Activated T-helper 2 cell treated with anti-CD3 and anti-CD28 coated beads, Interferon-gamma antibody, Interleukin-2, Interleukin-4, amounts not matched to agents 10 μg/mL and 5 μg/mL and 100 μg/mL, durations not matched to agents 14 hours and 24 hours and 36 hours (primary cell): ENCODE measurements at regions of chr20 and their contacts with region 1.

Region 1: GRCh38 chr20:18507218-18508021 is at the start of gene SEC23B:
- DNase-seq: peak; percentile 97
- H3K4me3 Mint-ChIP-seq: peak within 1 kb of the TSS; percentile 100
- H3K27ac Mint-ChIP-seq: peak within 1 kb of the TSS; percentile 100
- H3K4me1 Mint-ChIP-seq: peaks cover 27% of the 10 kb centered on the region
- H3K27me3 Mint-ChIP-seq: no peaks in the 10 kb centered on the region
- total RNA-seq, gene SEC23B: 126 and 131 TPM in 2 replicates

Region 2: DNA sequence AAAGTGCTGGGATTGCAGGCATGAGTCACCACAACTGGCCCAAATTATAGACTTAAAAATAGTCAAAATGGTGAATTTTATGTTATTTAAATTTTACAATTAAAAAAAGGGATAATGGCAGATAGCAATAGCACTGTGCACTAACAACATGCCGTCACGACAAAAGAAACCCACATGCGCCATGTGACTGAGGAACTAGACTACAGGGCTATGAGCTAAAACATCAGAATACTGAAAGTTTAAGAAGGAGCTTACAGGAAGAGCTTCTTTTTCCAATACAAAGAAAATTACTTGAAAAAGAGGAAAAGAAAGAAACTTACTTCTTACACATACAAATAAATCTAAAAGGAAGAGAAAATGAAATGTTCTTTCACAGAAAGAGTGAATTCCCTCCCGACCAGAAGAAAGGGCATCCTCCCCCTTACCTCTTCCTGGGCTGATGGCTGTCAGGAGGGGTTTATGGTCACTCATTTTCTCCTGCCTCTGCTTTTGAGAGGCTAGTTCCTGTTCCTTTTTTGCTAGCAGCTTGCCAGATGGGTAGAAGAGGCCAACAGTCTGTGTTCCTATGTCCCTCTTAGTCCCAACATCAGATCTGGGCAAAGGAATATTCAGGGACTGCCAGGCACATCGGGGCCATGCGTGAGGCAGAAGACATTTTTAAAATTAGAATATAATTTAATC is 95.1 kb before region 1 on chr20:
- intact Hi-C with region 1: loop called (anchors 5 kb)
- DNase-seq: no peak
- H3K4me3 Mint-ChIP-seq: no peak overlapping the region
- H3K27ac Mint-ChIP-seq: no peak overlapping the region
- H3K4me1 Mint-ChIP-seq: peaks cover 6% of the 10 kb centered on the region
- H3K27me3 Mint-ChIP-seq: peaks cover under 1% of the 10 kb centered on the region

Region 3: DNA sequence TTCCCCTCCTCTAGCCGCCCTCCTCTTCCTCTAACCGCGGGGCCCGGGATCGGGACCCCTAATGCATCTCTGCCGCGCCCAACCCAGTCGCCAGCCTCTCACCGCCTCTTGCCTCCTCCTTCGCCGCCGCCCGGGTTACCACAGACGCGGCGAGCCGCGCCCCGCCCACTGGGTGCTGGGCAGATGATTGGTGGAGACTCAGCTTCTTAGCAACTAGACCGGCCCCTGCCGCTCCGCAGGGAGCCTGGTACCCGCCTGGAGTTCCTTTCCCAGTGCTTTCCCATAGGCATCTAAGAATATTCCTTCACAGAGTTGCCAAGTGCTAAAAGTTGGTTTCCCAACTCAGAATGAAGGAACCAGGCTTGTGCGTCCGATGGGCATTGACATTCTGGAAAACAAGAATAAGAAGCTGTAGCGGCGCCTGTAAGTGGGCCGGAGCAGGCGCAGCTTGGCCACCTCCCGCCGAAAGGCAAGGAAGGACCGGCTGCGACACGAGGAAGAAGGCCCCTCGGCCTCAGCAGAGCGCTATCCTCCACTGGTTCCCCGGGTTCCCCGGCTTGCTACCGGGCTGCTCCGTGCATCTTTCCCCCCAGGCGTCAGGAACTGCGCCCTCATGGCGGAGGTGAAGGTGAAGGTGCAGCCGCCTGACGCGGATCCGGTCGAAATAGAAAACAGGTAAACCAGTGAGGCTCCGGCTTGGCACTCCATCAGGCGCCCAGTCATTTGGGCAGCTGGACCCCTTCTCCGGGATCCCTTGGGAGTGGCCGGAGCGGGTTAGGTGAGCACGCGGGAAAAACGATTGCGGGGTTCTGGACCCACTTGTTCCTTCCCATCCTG is 40.3 kb before region 1 on chr20 and contains the starts of genes DZANK1 and POLR3F:
- intact Hi-C with region 1: loop called (anchors 1 kb)
- DNase-seq: peak; percentile 90
- H3K4me3 Mint-ChIP-seq: peak within 1 kb of the TSS; percentile 97
- H3K27ac Mint-ChIP-seq: peak within 1 kb of the TSS; percentile 88
- H3K4me1 Mint-ChIP-seq: peaks cover 19% of the 10 kb centered on the region
- H3K27me3 Mint-ChIP-seq: no peaks in the 10 kb centered on the region
- total RNA-seq, gene DZANK1: 1.3 TPM in 2 replicates
- total RNA-seq, gene POLR3F: 12.5 and 13.5 TPM in 2 replicates

Region 4: GRCh38 chr20:18496740-18497592 is 10.5 kb before region 1 on chr20 and contains the start of gene RBBP9:
- intact Hi-C with region 1: loop called (anchors 1 kb)
- DNase-seq: peak; percentile 69
- H3K4me3 Mint-ChIP-seq: peak within 1 kb of the TSS; percentile 97
- H3K27ac Mint-ChIP-seq: peak within 1 kb of the TSS; percentile 87
- H3K4me1 Mint-ChIP-seq: peaks cover 13% of the 10 kb centered on the region
- H3K27me3 Mint-ChIP-seq: no peaks in the 10 kb centered on the region
- total RNA-seq, gene RBBP9: 21.2 and 23.5 TPM in 2 replicates

Region 5: DNA sequence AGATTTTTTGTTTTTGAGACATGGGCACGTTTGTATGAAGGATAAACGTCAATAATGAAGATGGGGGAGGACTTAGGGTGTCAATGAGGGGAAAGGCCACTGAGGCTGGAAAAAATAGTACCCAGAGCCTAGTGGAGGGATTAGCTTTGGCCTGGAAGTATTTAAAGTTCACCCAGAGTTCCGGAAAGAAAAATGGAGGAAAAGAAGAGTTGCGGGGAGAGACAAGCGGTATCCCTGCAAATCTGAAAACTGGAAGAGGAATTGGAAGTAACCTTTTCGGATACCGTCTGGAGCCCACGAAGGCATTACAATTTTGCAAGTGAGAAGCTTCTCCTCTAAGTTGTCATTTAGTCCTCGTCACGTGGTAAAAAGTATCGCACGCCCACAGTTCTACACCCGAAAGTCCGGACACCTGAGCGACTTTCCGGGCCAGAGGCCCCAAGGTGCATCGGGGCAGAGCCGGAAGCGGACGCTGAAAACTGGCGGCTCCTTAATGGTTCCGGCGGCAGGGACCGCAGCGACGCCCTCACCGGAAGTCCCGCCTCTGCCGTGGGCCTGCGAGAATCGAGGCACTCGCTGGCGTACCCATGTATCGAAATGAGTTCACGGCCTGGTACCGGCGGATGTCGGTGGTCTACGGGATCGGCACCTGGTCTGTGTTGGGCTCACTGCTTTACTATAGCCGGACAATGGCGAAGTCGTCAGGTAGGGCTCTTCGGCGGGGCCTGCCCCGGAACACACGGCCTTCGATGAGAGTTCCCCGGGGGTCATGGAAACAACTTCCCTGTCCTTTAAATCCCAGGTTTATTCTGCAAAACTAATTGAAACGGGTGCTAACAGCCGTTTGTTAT is 59.7 kb after region 1 on chr20 and contains the start of gene SMIM26:
- intact Hi-C with region 1: loop called (anchors 1 kb)
- DNase-seq: peak; percentile 91
- H3K4me3 Mint-ChIP-seq: peak within 1 kb of the TSS; percentile 97
- H3K27ac Mint-ChIP-seq: peak within 1 kb of the TSS; percentile 96
- H3K4me1 Mint-ChIP-seq: peaks cover 10% of the 10 kb centered on the region
- H3K27me3 Mint-ChIP-seq: no peaks in the 10 kb centered on the region
- total RNA-seq, gene SMIM26: 55.0 and 60.2 TPM in 2 replicates

Region 6: GRCh38 chr20:18587665-18588573 is 80.5 kb after region 1 on chr20 and contains the start of gene DTD1:
- intact Hi-C with region 1: loop called (anchors 1 kb)
- DNase-seq: peak; percentile 83
- H3K4me3 Mint-ChIP-seq: peak within 1 kb of the TSS; percentile 87
- H3K27ac Mint-ChIP-seq: peak within 1 kb of the TSS; percentile 74
- H3K4me1 Mint-ChIP-seq: peaks cover 20% of the 10 kb centered on the region
- H3K27me3 Mint-ChIP-seq: peaks cover 9% of the 10 kb centered on the region
- total RNA-seq, gene DTD1: 49.9 and 50.3 TPM in 2 replicates